Posterior cingulate gyrus (tissue), 11 donors: ENCODE measurements at regions of chr6 and their contacts with region 1.

Region 1: DNA sequence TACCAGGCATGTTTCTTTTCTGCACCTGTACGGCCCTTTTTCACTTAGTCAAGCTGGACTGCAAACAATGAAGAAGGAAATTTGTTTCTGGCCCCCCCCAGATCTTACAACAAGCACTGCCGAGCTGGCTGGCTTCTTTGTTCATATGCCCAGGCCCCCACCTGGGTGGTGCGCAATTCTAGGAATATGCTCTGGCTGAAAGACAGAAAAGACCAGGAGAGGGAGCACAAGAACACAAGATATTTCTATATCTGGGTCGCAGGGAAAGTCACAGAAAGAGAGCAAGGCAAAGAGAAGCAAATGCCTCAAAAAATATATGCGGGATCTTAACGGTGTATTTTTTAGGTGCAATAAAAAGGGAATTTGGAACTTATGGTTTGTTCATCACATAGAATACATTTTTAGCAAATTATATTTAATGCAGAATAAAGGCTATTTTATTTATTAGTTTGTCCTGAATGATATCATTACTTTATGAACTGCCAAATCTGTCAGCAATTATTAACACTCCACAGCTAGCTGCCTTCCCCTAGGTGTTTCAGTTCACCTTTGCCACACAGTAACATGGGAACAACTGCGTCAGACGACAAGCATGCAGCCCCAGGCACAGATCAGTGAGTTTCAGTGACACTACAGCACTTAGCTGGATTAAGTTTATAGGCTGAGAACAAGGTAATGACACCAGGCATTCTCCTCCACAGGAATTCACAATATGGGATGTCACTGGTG is 76.5 kb downstream of the GJA10 start:
- DNase-seq: peak in 6 of 10 donors; percentile 40 to 93 (median 50)

Region 2: DNA sequence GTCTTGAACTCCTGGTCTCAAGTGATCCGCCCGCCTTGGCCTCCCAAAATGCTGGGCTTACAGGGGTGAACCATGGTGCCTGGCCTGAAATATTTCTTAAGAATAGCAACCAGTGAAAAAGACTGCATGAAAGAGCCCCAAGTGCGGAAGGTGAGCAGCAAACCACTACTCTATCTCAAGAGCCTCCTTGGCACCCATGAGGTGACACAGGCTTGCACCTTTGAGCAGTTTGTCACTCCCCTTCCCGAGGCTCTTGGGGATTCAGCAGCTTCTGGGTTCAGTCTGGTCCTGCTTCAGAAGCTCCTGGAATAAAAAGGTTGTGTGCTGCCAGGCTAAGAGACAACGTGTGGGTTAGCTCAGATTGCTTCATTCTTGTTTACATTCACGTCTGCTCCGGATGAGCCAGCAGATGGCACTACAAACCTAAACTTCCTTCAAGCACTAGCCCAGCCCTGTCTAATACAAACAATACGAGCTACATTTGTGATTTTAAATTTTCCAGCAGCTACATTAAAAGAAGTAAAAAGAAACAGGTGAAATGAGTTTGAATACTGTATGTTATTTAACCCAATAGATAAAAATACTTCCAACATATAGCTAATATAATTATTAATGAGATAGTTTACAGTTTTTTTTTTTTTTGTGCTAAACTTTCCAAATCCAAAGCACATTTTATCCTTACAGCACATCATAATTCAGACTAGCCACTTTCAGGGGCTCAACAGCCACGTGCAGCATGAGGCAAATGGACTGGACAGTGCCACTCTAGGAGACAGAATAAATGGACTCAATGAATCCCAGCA is 30.3 kb before region 1 on chr6:
- intact Hi-C with region 1: loop called (anchors 1 kb)
- DNase-seq: peak in 9 of 10 donors; percentile 49 to 95 (median 79)

Region 3: GRCh38 chr6:90078513-90079289 is 107.9 kb after region 1 on chr6:
- intact Hi-C with region 1: loop called (anchors 5 kb)
- DNase-seq: no peak

Region 4: GRCh38 chr6:90216072-90216977 is 245.6 kb after region 1 on chr6:
- intact Hi-C with region 1: loop called (anchors 2 kb)
- DNase-seq: no peak

Region 5: GRCh38 chr6:90393232-90393884 is 422.6 kb after region 1 on chr6:
- intact Hi-C with region 1: loop called (anchors 2 kb)
- DNase-seq: peak in 4 of 10 donors; percentile 45 to 90 (median 62)

Region 6: DNA sequence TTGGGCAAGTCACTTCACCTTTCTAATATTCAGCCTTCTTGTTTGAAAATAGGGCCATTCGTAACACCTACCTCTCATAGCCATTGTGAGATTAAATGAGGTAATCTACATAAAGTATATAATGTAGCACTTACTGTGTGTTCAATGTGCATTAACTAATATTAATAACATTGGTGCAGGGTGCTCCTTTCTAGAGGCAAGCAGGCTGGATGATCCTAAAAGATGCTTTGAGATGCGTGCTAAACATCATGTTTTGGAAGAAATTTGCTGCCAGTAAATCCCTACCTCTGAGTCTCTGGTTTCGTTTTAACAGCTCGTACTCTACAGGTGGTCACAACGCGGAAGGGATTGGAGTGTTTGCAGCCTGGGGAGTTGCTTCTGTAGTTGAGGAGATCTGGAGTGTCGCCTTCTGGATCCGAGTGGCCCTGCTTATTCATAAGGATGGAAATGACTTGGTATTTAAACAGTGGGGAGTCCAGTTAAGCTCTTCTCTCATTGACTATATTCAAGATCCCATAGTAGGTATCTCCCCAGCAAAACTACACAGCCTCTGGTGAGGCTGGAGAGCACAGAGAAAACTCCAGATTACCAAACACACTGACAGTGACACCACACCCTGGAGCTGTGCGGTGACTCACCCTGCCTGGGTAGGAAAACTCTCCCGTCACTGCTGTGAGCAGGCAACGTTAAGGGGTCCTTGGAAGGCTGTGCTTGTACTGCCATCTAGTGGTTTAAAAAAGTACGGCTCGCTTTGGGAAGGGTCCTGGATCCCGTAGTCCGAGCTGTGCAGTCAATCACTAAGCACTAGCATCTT is 508.2 kb after region 1 on chr6:
- intact Hi-C with region 1: loop called (anchors 5 kb)
- DNase-seq: peak; percentile 69 to 97 (median 84)